Cardiac septum (tissue), 1 donor: ENCODE measurements at regions of chr2 and their contacts with region 1.

Region 1: GRCh38 chr2:234146087-234146826 is 95.8 kb downstream of the SPP2 start:
- DNase-seq: no peak

Region 2: GRCh38 chr2:234169187-234169570 is 22.9 kb after region 1 on chr2:
- intact Hi-C with region 1: no loop called
- DNase-seq: no peak

Region 3: GRCh38 chr2:234257856-234258561 is 111.8 kb after region 1 on chr2:
- intact Hi-C with region 1: loop called (anchors 5 kb)
- DNase-seq: no peak